Activated CD8-positive, alpha-beta T cell treated with anti-CD3 and anti-CD28 coated beads, Interleukin-2, amount 10 ng/mL, durations not matched to agents 7 days and 5 days (primary cell): ENCODE measurements at regions of chr11 and their contacts with region 1.

Region 1: GRCh38 chr11:131748151-131749050 is 378.0 kb downstream of the NTM start:
- DNase-seq: peak; percentile 50
- ATAC-seq: peak; percentile 42
- H3K4me3 Mint-ChIP-seq: no peak overlapping the region
- H3K27ac Mint-ChIP-seq: no peak overlapping the region
- H3K4me1 Mint-ChIP-seq: no peaks in the 10 kb centered on the region
- H3K27me3 Mint-ChIP-seq: no peaks in the 10 kb centered on the region

Region 2: GRCh38 chr11:131584785-131585592 is 163.4 kb before region 1 on chr11:
- CTCF ChIA-PET with region 1: no interaction called
- POLR2A ChIA-PET with region 1: no interaction called
- DNase-seq: no peak
- ATAC-seq: no peak
- H3K4me3 Mint-ChIP-seq: no peak overlapping the region
- H3K27ac Mint-ChIP-seq: no peak overlapping the region
- H3K4me1 Mint-ChIP-seq: no peaks in the 10 kb centered on the region
- H3K27me3 Mint-ChIP-seq: no peaks in the 10 kb centered on the region

Region 3: DNA sequence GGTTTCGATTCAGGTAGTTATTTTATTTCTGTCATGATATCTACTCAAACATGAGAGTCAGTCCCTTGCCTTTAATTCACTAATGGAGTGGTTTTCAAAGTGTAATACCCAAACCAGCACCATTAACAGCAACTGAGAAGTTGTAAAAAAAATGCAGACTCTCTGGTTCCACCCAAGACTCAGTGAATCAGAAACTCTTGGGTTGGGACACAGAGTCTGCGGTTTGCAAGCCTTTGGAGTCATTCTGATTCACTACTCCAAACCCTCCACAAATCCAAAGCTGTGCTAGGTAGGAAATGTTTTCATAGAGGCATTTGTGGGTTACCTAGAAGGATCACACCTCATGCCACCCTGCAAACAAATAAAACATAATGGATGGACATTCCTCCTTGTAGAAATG is 37.9 kb before region 1 on chr11:
- CTCF ChIA-PET with region 1: no interaction called
- POLR2A ChIA-PET with region 1: no interaction called
- DNase-seq: no peak
- ATAC-seq: no peak
- H3K4me3 Mint-ChIP-seq: no peak overlapping the region
- H3K27ac Mint-ChIP-seq: no peak overlapping the region
- H3K4me1 Mint-ChIP-seq: no peaks in the 10 kb centered on the region
- H3K27me3 Mint-ChIP-seq: no peaks in the 10 kb centered on the region

Region 4: GRCh38 chr11:131980888-131981668 is 232.7 kb after region 1 on chr11:
- CTCF ChIA-PET with region 1: no interaction called
- POLR2A ChIA-PET with region 1: no interaction called
- DNase-seq: no peak
- ATAC-seq: no peak
- H3K4me3 Mint-ChIP-seq: no peak overlapping the region
- H3K27ac Mint-ChIP-seq: no peak overlapping the region
- H3K4me1 Mint-ChIP-seq: no peaks in the 10 kb centered on the region
- H3K27me3 Mint-ChIP-seq: no peaks in the 10 kb centered on the region

Region 5: DNA sequence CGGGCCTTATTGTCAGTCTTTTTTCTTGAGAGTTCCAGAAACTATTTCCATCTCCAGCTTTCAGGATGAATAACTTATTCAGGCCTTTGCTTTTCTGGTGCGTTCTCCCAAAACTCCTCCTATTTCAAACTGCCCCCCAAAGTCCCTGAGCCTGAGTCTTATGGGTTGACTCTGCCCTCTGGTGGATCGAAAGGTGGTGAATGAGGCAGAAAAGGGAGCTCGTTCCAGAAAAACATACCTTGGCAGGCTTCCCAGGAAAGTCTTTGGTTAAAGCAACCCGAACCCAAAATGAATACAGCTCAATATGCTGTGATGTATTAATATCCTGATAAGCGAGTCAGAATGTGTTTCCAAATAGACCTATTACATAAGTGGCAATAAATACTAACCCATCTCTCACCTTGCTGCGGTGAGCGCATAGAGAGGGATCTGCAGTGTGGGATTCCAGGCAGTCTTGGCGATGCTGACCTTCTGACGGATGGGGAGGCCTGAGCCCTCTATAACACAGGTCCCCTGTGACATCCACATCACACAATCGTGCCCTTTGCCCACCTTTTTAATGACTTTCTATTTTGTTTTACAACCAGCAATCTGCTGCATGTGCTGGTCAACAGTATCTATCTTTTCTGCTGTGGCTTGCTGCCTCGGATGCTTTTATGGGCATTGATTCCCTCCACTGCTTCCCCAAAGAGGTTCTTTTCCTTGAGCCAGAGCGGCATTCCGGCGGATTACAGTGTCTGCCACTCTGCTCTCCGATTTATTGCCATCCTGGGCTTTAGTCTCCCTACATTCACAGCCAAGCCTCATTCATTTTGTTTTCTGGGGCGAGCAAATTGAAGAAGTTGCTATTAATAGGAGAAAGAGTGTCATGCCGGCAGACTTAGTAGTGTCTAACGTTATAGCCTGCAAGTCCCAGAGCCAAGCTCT is 378.8 kb after region 1 on chr11:
- CTCF ChIA-PET with region 1: interaction called, 10 read pairs
- POLR2A ChIA-PET with region 1: no interaction called
- DNase-seq: peak; percentile 27
- ATAC-seq: no peak
- H3K4me3 Mint-ChIP-seq: no peak overlapping the region
- H3K27ac Mint-ChIP-seq: no peak overlapping the region
- H3K4me1 Mint-ChIP-seq: no peaks in the 10 kb centered on the region
- H3K27me3 Mint-ChIP-seq: no peaks in the 10 kb centered on the region